SK-N-SH (cell line): ENCODE measurements at regions of chr17 and their contacts with region 1.

Region 1: GRCh38 chr17:43846221-43846712 is 709 bp upstream of the CD300LG start:
- DNase-seq: peak; percentile 93
- H3K4me3 ChIP-seq: no peak overlapping the region
- H3K27ac ChIP-seq: no peak overlapping the region
- H3K4me1 ChIP-seq: no peaks in the 10 kb centered on the region
- H3K27me3 ChIP-seq: no peaks in the 10 kb centered on the region
- CTCF ChIP-seq: peak; percentile 93
- EP300 ChIP-seq: no peak
- RAD21 ChIP-seq: peak; percentile 75

Region 2: GRCh38 chr17:43766413-43767052 is 79.7 kb before region 1 on chr17:
- CTCF ChIA-PET with region 1: interaction called, 15 read pairs
- POLR2A ChIA-PET with region 1: interaction called, 4 read pairs
- DNase-seq: peak; percentile 74
- H3K4me3 ChIP-seq: no peak overlapping the region; a peak in 1 of 4 replicates
- H3K27ac ChIP-seq: no peak overlapping the region
- H3K4me1 ChIP-seq: no peaks in the 10 kb centered on the region
- H3K27me3 ChIP-seq: no peaks in the 10 kb centered on the region
- CTCF ChIP-seq: peak; percentile 97
- EP300 ChIP-seq: no peak
- RAD21 ChIP-seq: peak; percentile 53

Region 3: GRCh38 chr17:43791589-43791988 is 54.7 kb before region 1 on chr17:
- CTCF ChIA-PET with region 1: interaction called, 10 read pairs
- POLR2A ChIA-PET with region 1: no interaction called
- DNase-seq: peak; percentile 55
- H3K4me3 ChIP-seq: no peak overlapping the region; a peak in 1 of 4 replicates
- H3K27ac ChIP-seq: no peak overlapping the region
- H3K4me1 ChIP-seq: no peaks in the 10 kb centered on the region; a peak in 1 of 4 replicates
- H3K27me3 ChIP-seq: no peaks in the 10 kb centered on the region
- CTCF ChIP-seq: no peak
- EP300 ChIP-seq: no peak
- RAD21 ChIP-seq: no peak

Region 4: DNA sequence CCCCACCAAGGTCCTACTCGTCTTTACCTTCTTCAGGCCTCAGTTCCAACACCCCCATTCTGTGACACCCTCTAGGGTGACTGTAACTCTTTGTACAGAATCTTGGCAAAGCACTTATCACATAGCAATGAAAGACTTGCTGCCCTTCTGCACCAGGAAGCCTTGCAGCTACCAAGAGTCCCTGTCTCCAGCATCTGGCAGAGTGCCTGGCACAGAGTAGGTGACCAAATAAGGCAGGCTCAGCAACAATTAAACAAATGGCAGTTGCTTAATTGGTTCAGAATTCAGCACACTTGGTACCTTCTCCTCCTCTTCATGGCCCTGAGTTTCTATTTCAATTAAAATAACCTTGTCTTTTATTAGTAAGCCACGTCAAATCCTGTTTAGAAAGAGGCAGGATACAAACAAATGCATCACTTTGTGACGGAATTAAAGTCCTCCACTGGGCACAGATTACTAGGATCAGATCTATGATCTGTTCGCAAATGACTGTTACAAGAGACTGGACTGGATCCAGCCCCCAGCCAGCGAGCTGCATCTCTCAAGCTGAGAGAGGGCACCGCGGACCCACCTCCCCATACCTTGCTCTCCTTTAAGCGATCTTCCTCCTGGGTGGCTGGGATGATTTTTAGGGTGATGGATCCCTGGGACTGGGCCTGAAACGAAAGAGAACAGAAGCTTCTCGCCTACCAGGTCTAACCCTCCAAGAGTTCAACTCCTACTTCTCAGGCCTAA is 22.8 kb before region 1 on chr17:
- CTCF ChIA-PET with region 1: interaction called, 11 read pairs
- POLR2A ChIA-PET with region 1: no interaction called
- DNase-seq: no peak
- H3K4me3 ChIP-seq: no peak overlapping the region
- H3K27ac ChIP-seq: no peak overlapping the region
- H3K4me1 ChIP-seq: peaks cover 0 to 5% of the 10 kb centered on the region in 2 experiments; a peak in 1 of 4 replicates
- H3K27me3 ChIP-seq: no peaks in the 10 kb centered on the region
- CTCF ChIP-seq: no peak
- EP300 ChIP-seq: no peak
- RAD21 ChIP-seq: no peak

Region 5: GRCh38 chr17:43861024-43861621 is 14.9 kb after region 1 on chr17:
- CTCF ChIA-PET with region 1: interaction called, 51 read pairs
- POLR2A ChIA-PET with region 1: interaction called, 3 read pairs
- DNase-seq: no peak
- H3K4me3 ChIP-seq: no peak overlapping the region
- H3K27ac ChIP-seq: no peak overlapping the region
- H3K4me1 ChIP-seq: no peaks in the 10 kb centered on the region; a peak in 1 of 4 replicates
- H3K27me3 ChIP-seq: peaks cover 11% of the 10 kb centered on the region; the same call in 1 of the 2 replicates
- CTCF ChIP-seq: no peak
- EP300 ChIP-seq: no peak
- RAD21 ChIP-seq: no peak

Region 6: GRCh38 chr17:43878260-43879175 is 32.3 kb after region 1 on chr17:
- CTCF ChIA-PET with region 1: interaction called, 33 read pairs
- POLR2A ChIA-PET with region 1: no interaction called
- DNase-seq: peak; percentile 91
- H3K4me3 ChIP-seq: no peak overlapping the region
- H3K27ac ChIP-seq: no peak overlapping the region
- H3K4me1 ChIP-seq: peaks cover 0 to 2% of the 10 kb centered on the region in 2 experiments; a peak in 1 of 4 replicates
- H3K27me3 ChIP-seq: no peaks in the 10 kb centered on the region
- CTCF ChIP-seq: peak; percentile 89
- EP300 ChIP-seq: no peak
- RAD21 ChIP-seq: peak; percentile 80

Region 7: DNA sequence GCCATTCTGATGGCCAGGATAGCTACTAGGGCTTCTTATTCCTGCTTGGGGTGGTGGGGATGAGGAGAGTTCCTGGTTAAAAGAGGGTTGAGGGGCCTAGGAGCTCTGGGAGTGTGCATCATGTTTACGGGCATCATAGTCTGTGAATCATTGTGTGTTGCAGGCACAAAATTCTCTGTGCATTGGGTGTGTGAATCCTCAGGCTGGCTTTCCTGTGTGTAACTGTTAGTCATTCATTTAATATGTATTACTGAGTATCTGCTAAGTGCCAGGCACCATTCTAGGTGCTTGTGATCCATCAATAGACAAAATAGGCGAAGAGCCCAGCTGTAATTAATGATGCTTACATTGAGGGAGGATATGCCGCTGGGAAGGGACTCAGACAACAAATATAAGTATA is 90.2 kb after region 1 on chr17:
- CTCF ChIA-PET with region 1: no interaction called
- POLR2A ChIA-PET with region 1: no interaction called
- DNase-seq: no peak
- H3K4me3 ChIP-seq: no peak overlapping the region
- H3K27ac ChIP-seq: no peak overlapping the region
- H3K4me1 ChIP-seq: peaks cover 0 to 7% of the 10 kb centered on the region in 2 experiments; a peak in 1 of 4 replicates
- H3K27me3 ChIP-seq: no peaks in the 10 kb centered on the region
- CTCF ChIP-seq: no peak
- EP300 ChIP-seq: no peak
- RAD21 ChIP-seq: no peak